Head of caudate nucleus (tissue), 42 donors: ENCODE measurements at regions of chr1 and their contacts with region 1.

Region 1: DNA sequence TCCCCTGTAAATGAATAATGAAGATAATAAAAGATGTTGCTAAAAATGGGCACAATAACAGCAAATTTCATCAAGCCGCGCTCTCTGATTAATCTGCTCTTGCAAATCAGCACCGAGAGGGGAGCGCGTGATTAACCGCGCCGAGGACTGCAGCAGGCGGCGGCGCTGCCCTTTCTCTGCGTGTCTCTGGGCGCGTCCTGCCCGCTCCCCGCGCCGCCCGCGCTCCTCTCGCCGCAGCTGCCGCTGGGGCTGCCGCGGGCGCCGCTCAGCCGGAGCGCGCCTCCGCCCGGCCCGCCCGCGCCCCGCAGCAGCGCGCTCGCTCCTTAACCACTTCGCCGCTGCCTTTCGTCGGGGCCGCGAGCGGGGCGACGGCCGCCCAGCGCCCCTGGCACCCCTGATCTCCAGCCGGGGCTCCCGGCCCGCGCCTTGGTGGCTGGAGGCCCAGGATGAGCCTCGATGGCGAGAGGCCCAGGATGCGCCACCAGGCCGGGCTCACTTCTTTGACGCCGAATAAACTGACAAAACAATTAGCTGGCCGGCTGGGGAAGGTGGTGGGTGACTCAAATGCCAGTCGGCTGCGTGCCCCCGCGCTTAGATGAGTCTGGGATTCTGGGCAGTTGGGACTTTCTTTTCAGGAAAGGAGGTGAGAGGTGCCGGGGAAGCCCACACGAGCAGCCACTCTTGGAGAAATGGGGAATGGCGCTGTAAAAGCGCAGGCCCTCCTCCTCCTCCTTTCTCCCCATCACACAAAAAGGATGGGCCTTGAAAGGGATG is 221.4 kb upstream of the PKN2 start:
- DNase-seq: peak; percentile 54 to 90 (median 76)

Region 2: DNA sequence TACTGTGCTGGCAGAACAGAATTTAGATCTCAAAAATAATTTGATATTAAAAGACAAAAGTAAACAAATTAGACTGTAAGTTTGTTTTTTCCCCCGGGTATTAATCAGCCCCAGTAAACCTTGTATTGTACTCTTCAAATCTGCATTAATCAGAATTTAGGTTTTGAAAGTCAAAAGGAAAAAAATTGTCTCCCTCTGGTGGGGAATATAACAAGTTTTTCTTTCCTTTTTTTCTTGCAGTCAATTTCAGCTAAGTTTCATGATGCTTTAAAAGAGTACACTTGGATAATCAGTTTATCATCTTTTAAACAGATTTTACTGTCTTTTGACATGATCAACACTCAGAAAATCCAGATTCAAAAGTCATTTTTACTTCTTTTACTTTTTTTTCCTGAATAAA is 86.9 kb after region 1 on chr1:
- intact Hi-C with region 1: loop called (anchors 5 kb)
- DNase-seq: no peak